Calu3 (cell line): ENCODE measurements at regions of chr10 and their contacts with region 1.

Region 1: GRCh38 chr10:63976538-63976937 is 455.3 kb downstream of the REEP3 start:
- DNase-seq: peak; percentile 86
- H3K4me3 Mint-ChIP-seq: no peak overlapping the region
- H3K27ac Mint-ChIP-seq: no peak overlapping the region
- H3K4me1 Mint-ChIP-seq: no peaks in the 10 kb centered on the region
- H3K27me3 Mint-ChIP-seq: peaks cover 29% of the 10 kb centered on the region
- CTCF ChIP-seq: peak; percentile 77

Region 2: GRCh38 chr10:63588436-63589167 is 387.9 kb before region 1 on chr10:
- CTCF ChIA-PET with region 1: no interaction called
- intact Hi-C with region 1: no loop called
- DNase-seq: peak; percentile 25
- H3K4me3 Mint-ChIP-seq: no peak overlapping the region
- H3K27ac Mint-ChIP-seq: no peak overlapping the region
- H3K4me1 Mint-ChIP-seq: no peaks in the 10 kb centered on the region
- H3K27me3 Mint-ChIP-seq: no peaks in the 10 kb centered on the region
- CTCF ChIP-seq: no peak

Region 3: GRCh38 chr10:63866075-63866746 is 110.3 kb before region 1 on chr10:
- CTCF ChIA-PET with region 1: interaction called, 105 read pairs
- intact Hi-C with region 1: loop called (anchors 1 kb)
- DNase-seq: peak; percentile 64
- H3K4me3 Mint-ChIP-seq: peak overlapping the region; percentile 3
- H3K27ac Mint-ChIP-seq: no peak overlapping the region
- H3K4me1 Mint-ChIP-seq: peaks cover 22% of the 10 kb centered on the region
- H3K27me3 Mint-ChIP-seq: peaks cover 53% of the 10 kb centered on the region
- CTCF ChIP-seq: peak; percentile 90

Region 4: DNA sequence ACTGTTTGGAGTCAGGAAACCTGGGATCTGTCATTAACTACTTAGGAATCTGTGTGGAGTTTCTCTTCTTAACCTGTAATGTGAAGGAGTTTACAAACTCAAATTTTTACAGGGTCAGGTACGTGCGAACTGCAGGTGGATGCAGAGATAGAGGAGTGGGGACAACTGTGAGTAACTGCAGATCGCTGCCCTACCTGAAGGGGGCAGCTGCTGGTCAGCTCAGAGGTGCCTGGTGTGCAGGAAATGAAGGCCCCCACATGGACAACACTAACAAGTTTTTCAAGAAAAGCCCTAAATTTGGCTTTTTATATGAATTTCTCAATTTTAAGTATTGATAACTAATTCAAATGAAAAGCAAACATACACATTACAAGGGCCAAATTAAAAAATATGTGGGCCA is 75.3 kb before region 1 on chr10:
- CTCF ChIA-PET with region 1: interaction called, 6 read pairs
- intact Hi-C with region 1: loop called (anchors 2 kb)
- DNase-seq: peak; percentile 32
- H3K4me3 Mint-ChIP-seq: no peak overlapping the region
- H3K27ac Mint-ChIP-seq: no peak overlapping the region
- H3K4me1 Mint-ChIP-seq: no peaks in the 10 kb centered on the region
- H3K27me3 Mint-ChIP-seq: peaks cover 16% of the 10 kb centered on the region
- CTCF ChIP-seq: peak; percentile 66

Region 5: DNA sequence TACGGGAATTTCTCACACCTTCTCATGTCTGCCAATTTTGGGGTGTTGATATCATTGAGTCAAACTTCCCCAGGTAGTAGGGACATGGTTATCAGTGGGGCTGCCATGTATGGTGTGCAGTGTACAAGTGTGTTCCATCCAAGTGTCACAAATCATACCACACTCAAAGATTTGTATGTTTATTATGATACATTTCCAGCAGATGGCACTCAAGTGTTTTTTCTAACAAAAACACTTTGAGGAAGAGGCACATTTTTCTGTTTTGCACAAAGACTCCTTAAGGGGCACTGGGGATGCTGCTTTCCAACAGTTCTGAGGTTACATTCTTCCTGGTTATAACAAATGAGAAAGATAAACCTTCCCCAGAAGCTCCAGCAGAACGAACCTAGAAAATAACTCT is 40.8 kb before region 1 on chr10:
- CTCF ChIA-PET with region 1: interaction called, 4 read pairs
- intact Hi-C with region 1: loop called (anchors 2 kb)
- DNase-seq: no peak
- H3K4me3 Mint-ChIP-seq: no peak overlapping the region
- H3K27ac Mint-ChIP-seq: no peak overlapping the region
- H3K4me1 Mint-ChIP-seq: no peaks in the 10 kb centered on the region
- H3K27me3 Mint-ChIP-seq: peaks cover 40% of the 10 kb centered on the region
- CTCF ChIP-seq: no peak

Region 6: DNA sequence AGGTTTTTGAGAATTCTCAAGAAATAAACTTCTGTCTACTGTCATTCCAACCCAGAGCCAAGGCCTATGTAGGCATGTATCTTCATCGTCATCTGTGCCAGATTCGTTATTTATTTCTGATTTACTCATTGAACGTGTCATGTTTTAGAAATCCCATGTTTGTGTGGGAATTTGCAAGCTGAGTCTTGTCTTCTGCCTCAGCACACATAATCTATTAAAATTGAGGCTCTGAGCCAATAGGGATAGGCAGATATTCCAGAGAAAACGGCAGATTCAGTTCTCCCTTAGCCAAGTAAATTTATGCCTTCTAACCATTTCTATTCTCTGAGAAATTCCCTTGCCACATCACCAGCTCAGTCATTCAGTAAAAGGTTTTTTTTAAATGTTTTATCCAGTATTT is 10.7 kb before region 1 on chr10:
- CTCF ChIA-PET with region 1: interaction called, 10 read pairs
- intact Hi-C with region 1: no loop called
- DNase-seq: no peak
- H3K4me3 Mint-ChIP-seq: no peak overlapping the region
- H3K27ac Mint-ChIP-seq: no peak overlapping the region
- H3K4me1 Mint-ChIP-seq: no peaks in the 10 kb centered on the region
- H3K27me3 Mint-ChIP-seq: peaks cover 37% of the 10 kb centered on the region
- CTCF ChIP-seq: no peak